ENCODE measurements at regions of chr20 and their contacts with region 1.

Region 1: GRCh38 chr20:32779500-32780211 is 17.5 kb downstream of the DNMT3B start:
- DNase-seq: no peak
- H3K4me3 Mint-ChIP-seq: no peak overlapping the region
- H3K27ac Mint-ChIP-seq: no peak overlapping the region
- H3K4me1 Mint-ChIP-seq: peaks cover 20% of the 10 kb centered on the region
- H3K27me3 Mint-ChIP-seq: no peaks in the 10 kb centered on the region

Region 2: DNA sequence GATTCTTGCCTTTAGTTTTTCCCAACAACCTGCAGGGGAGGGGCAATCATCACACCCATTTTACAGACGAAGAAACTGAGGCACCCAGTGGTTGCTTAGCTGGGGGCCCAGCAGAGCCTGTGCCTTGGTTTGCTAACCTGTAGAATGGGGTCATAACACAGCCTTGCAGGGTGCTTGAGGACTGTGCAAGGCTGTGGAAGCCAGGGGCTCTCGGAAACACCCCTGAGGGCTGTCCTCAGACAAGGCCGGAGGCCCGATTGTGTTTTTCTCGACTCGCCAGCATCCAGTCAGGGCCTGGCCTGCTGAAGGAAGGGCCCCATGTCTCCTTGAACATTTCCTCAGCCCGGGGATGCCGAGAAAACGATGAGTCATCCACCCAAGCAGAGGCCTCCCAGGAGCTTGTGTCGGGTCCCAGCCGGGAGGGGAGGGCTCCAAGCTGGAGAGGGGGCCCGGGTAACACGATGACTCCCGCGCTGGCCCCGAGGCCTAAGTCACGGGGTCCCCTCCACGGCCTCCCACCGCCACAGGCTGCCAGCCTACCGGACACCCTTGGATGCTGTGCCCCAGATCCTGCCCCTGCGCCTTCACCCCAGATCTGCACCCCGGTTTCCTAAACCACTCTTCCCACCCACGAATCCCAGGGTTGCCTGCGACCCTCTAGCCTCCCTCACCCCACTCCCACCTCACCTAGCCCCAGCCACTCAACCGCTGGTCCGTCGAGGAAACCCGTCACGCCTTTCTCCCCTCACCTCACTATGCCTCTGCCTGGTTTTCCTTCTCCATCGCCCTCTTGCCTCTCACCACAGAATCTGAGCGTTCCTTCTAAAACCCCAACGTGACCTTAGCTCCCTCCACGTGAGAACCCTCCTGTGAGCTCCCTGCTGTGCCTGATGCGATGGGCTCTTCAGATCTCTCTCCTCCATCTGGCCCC is 205.1 kb before region 1 on chr20:
- intact Hi-C with region 1: no loop called
- DNase-seq: no peak
- H3K4me3 Mint-ChIP-seq: no peak overlapping the region
- H3K27ac Mint-ChIP-seq: no peak overlapping the region
- H3K4me1 Mint-ChIP-seq: peaks cover 13% of the 10 kb centered on the region
- H3K27me3 Mint-ChIP-seq: no peaks in the 10 kb centered on the region

Region 3: DNA sequence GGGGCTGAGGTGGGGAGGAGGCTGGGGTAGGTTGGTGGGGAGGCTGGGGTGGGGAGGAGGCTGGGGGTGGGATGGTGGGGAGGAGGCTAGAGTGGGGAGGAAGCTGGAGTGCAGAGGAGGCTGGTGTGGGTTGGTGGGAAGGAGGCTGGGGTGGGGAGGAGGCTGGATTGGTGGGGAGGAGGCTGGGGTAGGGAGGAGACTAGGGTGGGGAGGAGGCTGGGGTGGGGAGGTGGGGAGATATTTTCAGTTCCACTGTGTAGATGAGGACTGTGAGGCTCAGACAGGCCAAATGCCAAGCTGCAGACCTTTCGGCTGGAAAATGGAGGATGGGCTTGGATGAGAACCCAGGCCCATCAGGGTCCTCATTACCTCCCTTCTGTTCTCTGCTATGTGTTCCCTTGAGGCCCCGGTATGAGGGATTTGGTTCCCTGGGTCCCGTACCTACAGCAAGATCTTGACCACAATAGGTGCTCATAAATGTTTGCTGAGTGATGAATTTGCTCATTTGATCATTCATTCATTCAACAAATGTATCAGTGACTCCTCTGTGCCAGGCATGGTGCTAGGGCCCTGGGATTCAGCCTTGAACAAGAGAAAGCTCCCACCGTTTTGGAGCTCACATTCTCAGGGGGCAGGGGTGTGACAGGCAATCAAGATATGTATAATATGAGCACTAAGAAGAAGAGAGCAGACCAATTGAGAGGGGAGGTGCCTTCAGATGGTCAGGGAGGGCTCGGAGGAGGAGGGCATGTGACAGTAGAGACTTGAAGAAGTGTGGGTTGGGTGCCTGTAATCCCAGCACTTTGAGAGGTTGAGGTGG is 158.4 kb before region 1 on chr20:
- intact Hi-C with region 1: no loop called
- DNase-seq: no peak
- H3K4me3 Mint-ChIP-seq: no peak overlapping the region
- H3K27ac Mint-ChIP-seq: no peak overlapping the region
- H3K4me1 Mint-ChIP-seq: no peaks in the 10 kb centered on the region
- H3K27me3 Mint-ChIP-seq: peaks cover 3% of the 10 kb centered on the region

Region 4: GRCh38 chr20:32674362-32674789 is 105.3 kb before region 1 on chr20:
- intact Hi-C with region 1: loop called (anchors 1 kb)
- DNase-seq: peak; percentile 57
- H3K4me3 Mint-ChIP-seq: no peak overlapping the region
- H3K27ac Mint-ChIP-seq: peak overlapping the region; percentile 33
- H3K4me1 Mint-ChIP-seq: peaks cover 18% of the 10 kb centered on the region
- H3K27me3 Mint-ChIP-seq: no peaks in the 10 kb centered on the region

Region 5: DNA sequence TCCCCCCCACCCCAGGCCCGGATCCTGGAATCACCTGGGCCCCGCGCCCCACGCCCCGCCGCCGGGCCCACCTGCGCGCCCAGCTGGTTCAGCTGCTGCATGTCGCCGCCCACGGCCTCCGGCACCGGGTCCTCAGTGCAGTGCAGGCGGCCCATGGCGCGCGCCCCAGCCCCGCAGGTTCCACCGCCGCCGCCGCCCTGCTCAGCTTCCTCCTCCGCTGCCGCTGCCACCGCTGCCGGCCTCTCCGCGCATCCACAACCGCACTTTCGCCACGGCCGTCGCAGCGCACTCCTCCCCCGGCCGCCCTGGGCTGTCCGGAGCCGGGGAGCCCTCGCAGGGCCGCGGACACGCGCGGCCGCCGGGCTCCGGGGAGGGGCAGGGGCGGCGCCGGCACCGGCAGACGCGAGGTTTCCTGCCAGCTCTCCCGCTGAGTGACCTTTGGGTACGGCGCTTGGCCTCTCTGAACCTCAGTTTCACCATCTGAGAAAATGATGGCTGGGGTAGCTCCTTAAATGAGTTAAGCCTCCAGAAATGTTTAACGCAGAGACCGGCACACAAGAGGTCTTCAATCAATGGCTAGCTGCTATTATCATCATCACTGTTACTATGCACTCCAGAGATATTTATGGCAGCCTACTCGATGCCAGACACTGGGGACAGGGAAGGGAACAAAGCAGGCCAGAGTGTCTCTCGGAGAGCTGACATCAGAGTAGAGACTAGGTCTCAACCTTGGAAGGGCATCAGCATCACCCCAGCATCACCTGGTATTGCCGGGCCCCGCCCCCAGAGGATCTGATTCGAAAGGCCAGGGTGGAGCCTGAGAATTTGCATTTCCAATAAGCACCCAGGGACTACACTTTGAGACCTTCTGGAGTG is 36.2 kb before region 1 on chr20 and contains the start of gene COMMD7:
- intact Hi-C with region 1: loop called (anchors 5 kb)
- DNase-seq: peak; percentile 67
- H3K4me3 Mint-ChIP-seq: peak within 1 kb of the TSS; percentile 97
- H3K27ac Mint-ChIP-seq: peak within 1 kb of the TSS; percentile 99
- H3K4me1 Mint-ChIP-seq: peaks cover 26% of the 10 kb centered on the region
- H3K27me3 Mint-ChIP-seq: no peaks in the 10 kb centered on the region
- total RNA-seq, gene COMMD7: 55.7 and 56.5 TPM in 2 replicates

Region 6: DNA sequence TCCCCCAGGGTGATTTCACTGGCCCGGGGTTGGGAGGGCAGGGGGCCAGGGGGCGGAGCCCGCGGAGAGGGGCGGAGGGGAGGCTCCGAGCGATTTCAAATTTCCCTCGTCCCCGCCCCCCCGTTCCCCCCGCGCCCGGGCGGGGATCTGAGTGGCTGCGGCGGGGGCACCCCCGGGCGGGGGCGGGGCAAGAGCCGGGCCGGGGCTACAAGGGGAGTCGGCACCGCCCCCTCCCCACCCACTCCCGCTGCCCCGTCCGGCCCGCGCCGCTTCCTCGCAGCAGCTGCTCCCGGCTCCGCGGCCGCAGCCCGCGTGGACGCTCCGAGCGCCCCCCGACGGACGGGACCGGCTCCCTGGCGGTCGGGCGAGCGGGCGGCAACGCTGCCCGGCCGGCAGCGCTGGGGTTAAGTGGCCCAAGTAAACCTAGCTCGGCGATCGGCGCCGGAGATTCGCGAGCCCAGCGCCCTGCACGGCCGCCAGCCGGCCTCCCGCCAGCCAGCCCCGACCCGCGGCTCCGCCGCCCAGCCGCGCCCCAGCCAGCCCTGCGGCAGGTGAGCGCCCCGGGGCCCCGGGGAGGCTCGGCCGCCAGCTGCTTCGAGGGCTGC is 17.4 kb before region 1 on chr20 and contains the start of gene DNMT3B:
- intact Hi-C with region 1: loop called (anchors 2 kb)
- DNase-seq: peak; percentile 64
- H3K4me3 Mint-ChIP-seq: peak within 1 kb of the TSS; percentile 87
- H3K27ac Mint-ChIP-seq: peak within 1 kb of the TSS; percentile 57
- H3K4me1 Mint-ChIP-seq: peaks cover 10% of the 10 kb centered on the region
- H3K27me3 Mint-ChIP-seq: peaks cover 8% of the 10 kb centered on the region
- total RNA-seq, gene DNMT3B: 2.8 and 3.4 TPM in 2 replicates

Region 7: DNA sequence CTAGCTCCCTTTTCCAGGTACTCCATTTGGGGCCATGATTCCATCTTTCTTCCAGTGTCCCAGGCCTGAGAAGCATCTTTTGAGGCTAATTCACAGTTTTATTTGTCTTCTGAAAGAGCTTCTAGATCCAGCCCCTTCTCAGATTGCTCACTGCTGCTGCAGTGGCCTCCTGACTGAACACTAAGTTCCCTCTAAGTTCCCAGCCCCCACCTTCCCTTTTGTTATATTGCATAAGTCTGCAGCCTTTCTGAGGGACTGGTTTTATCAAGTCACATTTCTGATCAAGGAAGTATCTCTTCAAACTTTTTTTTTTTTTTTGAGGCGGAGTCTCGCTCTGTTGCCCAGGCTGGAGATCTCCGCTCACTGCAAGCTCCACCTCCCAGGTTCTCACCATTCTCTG is 50.8 kb after region 1 on chr20:
- intact Hi-C with region 1: no loop called
- DNase-seq: no peak
- H3K4me3 Mint-ChIP-seq: no peak overlapping the region
- H3K27ac Mint-ChIP-seq: no peak overlapping the region
- H3K4me1 Mint-ChIP-seq: peaks cover 37% of the 10 kb centered on the region
- H3K27me3 Mint-ChIP-seq: no peaks in the 10 kb centered on the region

Region 8: DNA sequence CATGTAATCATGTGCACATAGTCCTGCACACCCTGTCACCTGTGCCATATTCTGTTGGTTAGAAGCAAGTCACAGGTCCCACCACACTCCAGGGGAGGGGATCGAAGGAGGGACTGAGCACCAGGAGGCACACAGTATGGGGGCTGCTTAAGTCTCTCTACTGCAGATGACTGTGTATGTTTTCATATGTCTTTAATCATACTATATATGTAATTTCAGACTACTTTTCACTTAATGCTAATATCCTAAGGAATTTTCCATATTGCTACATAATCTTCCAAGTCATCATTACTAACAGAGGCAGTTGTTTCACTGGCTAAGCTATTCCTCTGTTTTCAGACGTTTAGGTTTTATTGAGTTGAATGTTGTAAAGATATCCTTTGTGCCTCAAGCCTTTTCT is 89.9 kb after region 1 on chr20:
- intact Hi-C with region 1: no loop called
- DNase-seq: no peak
- H3K4me3 Mint-ChIP-seq: no peak overlapping the region
- H3K27ac Mint-ChIP-seq: no peak overlapping the region
- H3K4me1 Mint-ChIP-seq: peaks cover 2% of the 10 kb centered on the region
- H3K27me3 Mint-ChIP-seq: no peaks in the 10 kb centered on the region